ENCODE measurements at regions of chr2 and their contacts with region 1.

Region 1: GRCh38 chr2:233982421-233983121 is 65.4 kb downstream of the TRPM8 start:
- DNase-seq: peak; percentile 56 to 85
- H3K4me3 ChIP-seq: no peak overlapping the region
- H3K27ac ChIP-seq: peak overlapping the region; percentile 12; the same call in 1 of the 2 replicates
- H3K4me1 ChIP-seq: peaks cover 36% of the 10 kb centered on the region
- H3K27me3 ChIP-seq: no peaks in the 10 kb centered on the region
- CTCF ChIP-seq: no peak

Region 2: GRCh38 chr2:235709124-235709813 is 1726.7 kb after region 1 on chr2:
- CTCF ChIA-PET with region 1: no interaction called
- POLR2A ChIA-PET with region 1: interaction called, 10 read pairs
- intact Hi-C with region 1: no loop called
- DNase-seq: peak; percentile 99 to 100
- H3K4me3 ChIP-seq: peak overlapping the region; percentile 9; the same call in 1 of the 2 replicates
- H3K27ac ChIP-seq: peak overlapping the region; percentile 96
- H3K4me1 ChIP-seq: peaks cover 57% of the 10 kb centered on the region
- H3K27me3 ChIP-seq: no peaks in the 10 kb centered on the region
- CTCF ChIP-seq: no peak